ENCODE measurements at regions of chr12 and their contacts with region 1.

Region 1: DNA sequence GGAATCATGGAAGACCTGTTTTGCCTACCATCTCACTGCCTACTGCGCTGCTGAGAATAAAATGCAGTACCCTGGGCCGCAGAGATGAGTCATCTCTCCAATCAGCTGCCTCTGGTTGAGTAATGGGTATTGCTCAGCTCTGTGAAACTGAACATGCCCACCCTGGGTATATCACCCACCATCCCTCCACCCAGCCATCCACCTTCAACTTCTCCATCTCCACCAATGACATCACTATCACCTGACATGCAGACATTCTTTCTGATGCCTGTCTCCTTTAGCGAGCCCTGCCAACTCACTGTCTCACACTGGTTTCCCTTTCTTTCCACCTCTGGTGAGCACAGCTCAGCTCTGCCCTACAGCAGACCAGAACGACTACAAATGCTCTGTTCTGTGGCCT is 33.6 kb downstream of the E2F7 start:
- DNase-seq: no peak
- CTCF ChIP-seq: no peak

Region 2: DNA sequence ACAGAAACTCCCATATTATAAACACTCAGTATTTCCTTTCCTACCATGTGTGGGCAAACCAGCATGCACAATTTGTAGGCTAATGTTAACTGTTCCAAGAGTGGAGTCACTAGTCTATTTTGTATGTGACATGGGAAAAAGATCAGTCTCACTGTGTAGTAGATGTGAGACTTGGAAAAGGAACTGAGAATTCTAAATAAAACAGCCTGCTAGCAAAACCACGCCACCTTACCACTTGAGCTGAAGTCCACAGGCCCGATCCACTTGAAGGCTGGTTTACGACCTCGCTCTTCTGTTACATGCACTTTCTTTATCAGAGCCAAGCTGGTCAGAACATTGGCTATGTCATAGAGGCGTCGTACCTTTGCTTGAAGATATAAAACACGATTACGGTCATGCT is 11.1 kb after region 1 on chr12:
- CTCF ChIA-PET with region 1: interaction called, 11 read pairs
- POLR2A ChIA-PET with region 1: no interaction called
- DNase-seq: no peak
- CTCF ChIP-seq: no peak

Region 3: GRCh38 chr12:77049767-77050353 is 18.1 kb after region 1 on chr12:
- CTCF ChIA-PET with region 1: interaction called, 31 read pairs
- POLR2A ChIA-PET with region 1: no interaction called
- DNase-seq: peak; percentile 43
- CTCF ChIP-seq: peak; percentile 71

Measured in GM10248 (cell line).